Activated CD4-positive, alpha-beta memory T cell treated with anti-CD3 and anti-CD28 coated beads for 36 hours (primary cell): ENCODE measurements at regions of chr2 and their contacts with region 1.

Region 1: GRCh38 chr2:130342533-130343275 is at the start of gene IMP4:
- DNase-seq: peak; percentile 97
- H3K4me3 Mint-ChIP-seq: peak within 1 kb of the TSS; percentile 98
- H3K27ac Mint-ChIP-seq: peak within 1 kb of the TSS; percentile 99
- H3K4me1 Mint-ChIP-seq: peaks cover 23% of the 10 kb centered on the region
- H3K27me3 Mint-ChIP-seq: no peaks in the 10 kb centered on the region
- total RNA-seq, gene IMP4: 125 to 128 TPM

Region 2: DNA sequence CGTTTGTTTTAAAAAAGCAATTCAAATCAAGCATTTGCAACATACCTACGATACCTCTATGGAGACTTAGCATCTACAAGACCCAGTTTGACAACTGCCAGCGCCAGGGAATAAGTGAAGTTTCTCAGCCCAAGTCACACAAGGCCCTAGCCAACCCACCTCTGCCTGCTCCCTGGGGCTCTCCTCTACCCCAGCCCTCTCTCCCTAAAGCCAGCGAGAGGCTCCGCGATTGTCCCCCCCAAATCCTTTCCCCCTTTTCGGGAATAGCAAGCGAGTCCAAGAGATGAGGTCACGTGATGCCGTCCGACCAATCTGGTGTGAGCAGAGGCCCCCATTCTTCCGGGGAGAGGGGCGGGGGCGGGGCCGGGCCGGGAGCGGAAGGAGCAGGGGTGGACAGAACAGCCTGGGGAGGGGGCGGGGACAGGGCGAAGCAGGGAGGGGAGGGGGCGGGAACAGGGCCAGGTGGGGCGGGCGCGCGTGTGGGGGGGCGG is 465.4 kb before region 1 on chr2:
- CTCF ChIA-PET with region 1: no interaction called
- POLR2A ChIA-PET with region 1: no interaction called
- intact Hi-C with region 1: loop called (anchors 5 kb)
- DNase-seq: peak; percentile 90
- H3K4me3 Mint-ChIP-seq: peak overlapping the region; percentile 91
- H3K27ac Mint-ChIP-seq: peak overlapping the region; percentile 78
- H3K4me1 Mint-ChIP-seq: peaks cover 9% of the 10 kb centered on the region
- H3K27me3 Mint-ChIP-seq: no peaks in the 10 kb centered on the region

Region 3: GRCh38 chr2:130165293-130166016 is 177.2 kb before region 1 on chr2:
- CTCF ChIA-PET with region 1: no interaction called
- POLR2A ChIA-PET with region 1: no interaction called
- intact Hi-C with region 1: no loop called
- DNase-seq: no peak
- H3K4me3 Mint-ChIP-seq: no peak overlapping the region
- H3K27ac Mint-ChIP-seq: no peak overlapping the region
- H3K4me1 Mint-ChIP-seq: peaks cover 2% of the 10 kb centered on the region
- H3K27me3 Mint-ChIP-seq: no peaks in the 10 kb centered on the region

Region 4: DNA sequence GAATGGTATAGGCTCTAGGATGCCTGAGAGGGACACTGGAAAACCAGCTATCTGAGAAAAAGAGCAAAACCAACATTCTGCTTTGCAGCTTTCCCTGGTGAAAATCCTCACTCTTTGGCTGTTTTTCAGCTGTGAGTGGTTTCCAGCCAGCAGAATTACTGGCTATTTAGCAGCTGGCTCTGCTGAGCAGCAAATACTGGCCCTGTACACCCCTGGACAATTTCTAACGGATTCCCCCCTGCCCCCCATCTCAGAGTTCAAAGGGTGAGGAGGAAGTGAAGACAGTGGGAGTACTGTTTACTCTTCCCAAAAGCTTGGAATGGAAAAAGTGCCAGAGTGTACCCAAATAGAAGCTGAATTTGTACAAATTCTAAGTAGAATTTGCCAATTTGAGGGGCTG is 26.1 kb before region 1 on chr2:
- CTCF ChIA-PET with region 1: no interaction called
- POLR2A ChIA-PET with region 1: no interaction called
- intact Hi-C with region 1: no loop called
- DNase-seq: no peak
- H3K4me3 Mint-ChIP-seq: no peak overlapping the region
- H3K27ac Mint-ChIP-seq: no peak overlapping the region
- H3K4me1 Mint-ChIP-seq: no peaks in the 10 kb centered on the region
- H3K27me3 Mint-ChIP-seq: peaks cover 5% of the 10 kb centered on the region

Region 5: GRCh38 chr2:130332271-130333073 is 10.2 kb before region 1 on chr2:
- CTCF ChIA-PET with region 1: interaction called, 41 read pairs
- POLR2A ChIA-PET with region 1: interaction called, 17 read pairs
- intact Hi-C with region 1: no loop called
- DNase-seq: peak; percentile 81
- H3K4me3 Mint-ChIP-seq: no peak overlapping the region
- H3K27ac Mint-ChIP-seq: no peak overlapping the region
- H3K4me1 Mint-ChIP-seq: peaks cover 10% of the 10 kb centered on the region
- H3K27me3 Mint-ChIP-seq: peaks cover 14% of the 10 kb centered on the region

Region 6: DNA sequence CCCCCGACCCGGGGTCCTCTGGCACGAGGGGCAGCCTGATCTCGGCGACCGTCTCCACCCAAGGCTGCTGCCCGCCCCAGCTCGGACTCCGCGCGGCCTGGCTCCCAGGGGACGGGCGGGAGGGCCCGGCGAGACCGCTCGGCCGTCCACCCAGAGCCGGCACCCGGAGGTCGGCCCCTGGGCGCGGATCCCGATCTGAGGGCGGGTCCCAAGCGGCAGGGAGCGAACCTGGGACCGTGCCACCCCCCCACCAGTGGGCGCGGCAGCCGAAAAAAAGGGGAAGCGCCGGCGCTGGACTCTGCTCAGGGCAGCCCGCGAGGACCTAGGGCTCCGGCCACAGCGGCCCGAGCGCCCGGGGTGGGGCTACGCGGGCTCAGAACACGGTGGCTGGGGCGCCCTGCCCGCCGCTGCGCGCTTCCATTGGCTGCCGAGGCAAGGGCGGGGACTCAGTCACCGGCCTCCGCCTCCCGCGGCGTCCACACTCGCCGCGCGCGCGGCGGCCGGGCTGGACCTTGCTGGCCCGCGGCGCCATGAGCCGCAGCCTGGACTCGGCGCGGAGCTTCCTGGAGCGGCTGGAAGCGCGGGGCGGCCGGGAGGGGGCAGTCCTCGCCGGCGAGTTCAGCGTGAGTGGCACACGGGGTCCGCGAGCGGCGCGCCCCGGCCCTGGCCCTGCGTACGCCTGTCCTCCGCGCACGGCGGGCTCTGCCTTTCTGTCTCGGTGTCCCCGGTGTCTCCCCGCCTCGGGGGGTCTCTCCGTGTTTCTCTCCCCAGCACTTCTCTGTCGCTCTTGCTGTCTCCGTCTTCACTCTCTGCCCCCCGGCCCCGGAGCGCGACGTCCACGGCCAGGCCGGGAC is 13.1 kb after region 1 on chr2 and contains the start of gene PTPN18:
- CTCF ChIA-PET with region 1: interaction called, 9 read pairs
- POLR2A ChIA-PET with region 1: interaction called, 7 read pairs
- intact Hi-C with region 1: loop called (anchors 1 kb)
- DNase-seq: peak; percentile 73
- H3K4me3 Mint-ChIP-seq: peak within 1 kb of the TSS; percentile 75
- H3K27ac Mint-ChIP-seq: no peak within 1 kb of the TSS
- H3K4me1 Mint-ChIP-seq: peaks cover 12% of the 10 kb centered on the region
- H3K27me3 Mint-ChIP-seq: no peaks in the 10 kb centered on the region
- total RNA-seq, gene PTPN18: 42.1 to 44.9 TPM

Region 7: DNA sequence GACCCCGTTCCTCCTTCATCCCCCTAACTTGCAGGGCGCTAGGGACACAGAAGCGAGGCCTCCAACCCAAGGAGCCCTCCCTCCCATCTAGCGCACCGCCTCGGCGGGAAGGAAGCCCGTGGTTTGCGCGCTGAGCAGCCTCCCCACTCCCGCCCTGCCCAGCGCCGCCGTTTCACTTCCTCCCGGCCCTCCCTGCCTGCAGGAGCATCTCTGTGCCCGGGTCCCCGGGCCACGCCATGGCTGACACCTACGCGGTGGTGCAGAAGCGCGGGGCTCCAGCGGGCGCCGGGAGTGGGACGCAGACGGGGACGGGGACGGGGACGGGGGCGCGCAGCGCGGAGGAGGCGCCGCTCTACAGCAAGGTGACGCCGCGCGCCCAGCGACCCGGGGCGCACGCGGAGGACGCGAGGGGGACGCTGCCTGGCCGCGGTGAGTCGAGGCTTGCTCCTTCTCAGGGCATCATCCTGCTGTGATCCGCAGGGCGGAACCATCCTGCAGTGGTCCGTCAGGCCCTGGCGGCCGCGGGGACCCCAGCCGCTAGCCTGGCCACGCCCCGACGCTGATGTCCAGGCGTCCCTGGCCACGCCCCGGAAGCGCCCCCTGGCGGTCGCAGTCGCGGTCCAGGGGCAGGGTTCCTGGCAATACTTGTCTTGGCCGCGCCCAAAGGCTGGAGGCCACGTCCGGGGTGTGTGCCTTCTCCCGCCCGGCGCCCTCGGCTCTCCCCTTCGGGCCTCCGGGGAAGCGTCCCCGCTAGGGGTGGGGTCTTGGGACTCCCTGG is 29.5 kb after region 1 on chr2:
- CTCF ChIA-PET with region 1: interaction called, 15 read pairs
- POLR2A ChIA-PET with region 1: interaction called, 32 read pairs
- intact Hi-C with region 1: loop called (anchors 1 kb)
- DNase-seq: peak; percentile 82
- H3K4me3 Mint-ChIP-seq: peak overlapping the region; percentile 87
- H3K27ac Mint-ChIP-seq: peak overlapping the region; percentile 98
- H3K4me1 Mint-ChIP-seq: peaks cover 56% of the 10 kb centered on the region
- H3K27me3 Mint-ChIP-seq: no peaks in the 10 kb centered on the region

Region 8: GRCh38 chr2:130824492-130825061 is 481.9 kb after region 1 on chr2:
- CTCF ChIA-PET with region 1: no interaction called
- POLR2A ChIA-PET with region 1: no interaction called
- intact Hi-C with region 1: loop called (anchors 10 kb)
- DNase-seq: peak; percentile 83
- H3K4me3 Mint-ChIP-seq: peak overlapping the region; percentile 39
- H3K27ac Mint-ChIP-seq: peak overlapping the region; percentile 90
- H3K4me1 Mint-ChIP-seq: peaks cover 21% of the 10 kb centered on the region
- H3K27me3 Mint-ChIP-seq: no peaks in the 10 kb centered on the region